Activated CD4-positive, alpha-beta memory T cell treated with anti-CD3 and anti-CD28 coated beads for 36 hours (primary cell): ENCODE measurements at regions of chr5 and their contacts with region 1.

Region 1: GRCh38 chr5:43066799-43067741 is 27.0 kb upstream of the ANXA2R start:
- DNase-seq: peak; percentile 92
- H3K4me3 Mint-ChIP-seq: peak overlapping the region; percentile 96
- H3K27ac Mint-ChIP-seq: peak overlapping the region; percentile 99
- H3K4me1 Mint-ChIP-seq: peaks cover 37% of the 10 kb centered on the region
- H3K27me3 Mint-ChIP-seq: no peaks in the 10 kb centered on the region

Region 2: GRCh38 chr5:42813533-42813932 is 253.5 kb before region 1 on chr5:
- CTCF ChIA-PET with region 1: no interaction called
- POLR2A ChIA-PET with region 1: no interaction called
- intact Hi-C with region 1: no loop called
- DNase-seq: no peak
- H3K4me3 Mint-ChIP-seq: no peak overlapping the region
- H3K27ac Mint-ChIP-seq: no peak overlapping the region
- H3K4me1 Mint-ChIP-seq: peaks cover 2% of the 10 kb centered on the region
- H3K27me3 Mint-ChIP-seq: peaks cover 1% of the 10 kb centered on the region

Region 3: DNA sequence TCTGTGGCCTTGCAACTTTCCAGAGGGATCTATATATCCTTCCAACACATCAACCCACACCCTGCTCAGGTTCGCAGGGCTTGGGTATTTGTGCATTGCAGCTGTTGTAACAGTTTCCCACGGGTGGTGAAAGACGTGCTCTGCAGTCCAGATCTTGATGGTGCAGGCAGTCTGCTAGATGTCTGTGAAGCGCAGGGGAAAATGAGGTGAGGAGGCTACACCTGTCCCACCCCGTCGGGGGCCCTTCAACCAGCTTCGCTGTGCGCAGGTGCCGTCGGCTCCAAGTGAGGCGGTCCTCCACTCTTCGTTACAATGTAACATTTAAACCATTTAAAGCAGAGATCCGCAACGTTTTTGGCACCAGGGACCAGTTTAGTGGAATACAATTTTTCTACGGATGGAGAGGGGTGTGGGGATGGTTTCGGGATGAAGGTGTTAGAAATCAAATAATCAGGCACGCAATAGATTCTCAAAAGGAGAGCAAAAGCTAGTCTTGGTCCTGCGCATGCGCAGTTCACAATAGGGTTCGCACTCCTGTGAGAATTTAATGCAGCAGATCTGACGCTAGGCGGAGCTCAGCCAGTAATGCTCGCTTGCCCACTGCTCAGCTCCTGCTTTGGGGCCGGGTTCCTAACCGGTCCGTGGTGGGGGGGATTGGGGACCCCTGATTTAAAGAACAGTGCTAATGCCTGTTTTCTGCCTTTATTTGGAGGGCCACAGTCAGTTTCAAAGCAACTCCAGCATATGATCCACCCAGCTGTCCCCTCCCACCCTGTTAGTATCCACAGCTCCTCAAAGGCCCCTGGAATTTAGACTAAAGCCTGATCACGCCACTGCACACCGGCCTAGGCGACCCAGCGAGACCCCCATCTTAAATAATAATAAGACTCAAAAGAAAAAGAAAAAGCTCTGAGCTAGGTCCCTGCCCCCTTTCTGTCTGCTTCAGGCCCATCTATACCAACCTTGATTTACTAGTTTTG is 158.3 kb before region 1 on chr5:
- CTCF ChIA-PET with region 1: interaction called, 13 read pairs
- POLR2A ChIA-PET with region 1: no interaction called
- intact Hi-C with region 1: loop called (anchors 1 kb)
- DNase-seq: peak; percentile 93
- H3K4me3 Mint-ChIP-seq: peak overlapping the region; percentile 82
- H3K27ac Mint-ChIP-seq: peak overlapping the region; percentile 70
- H3K4me1 Mint-ChIP-seq: peaks cover 10% of the 10 kb centered on the region
- H3K27me3 Mint-ChIP-seq: peaks cover 10% of the 10 kb centered on the region

Region 4: DNA sequence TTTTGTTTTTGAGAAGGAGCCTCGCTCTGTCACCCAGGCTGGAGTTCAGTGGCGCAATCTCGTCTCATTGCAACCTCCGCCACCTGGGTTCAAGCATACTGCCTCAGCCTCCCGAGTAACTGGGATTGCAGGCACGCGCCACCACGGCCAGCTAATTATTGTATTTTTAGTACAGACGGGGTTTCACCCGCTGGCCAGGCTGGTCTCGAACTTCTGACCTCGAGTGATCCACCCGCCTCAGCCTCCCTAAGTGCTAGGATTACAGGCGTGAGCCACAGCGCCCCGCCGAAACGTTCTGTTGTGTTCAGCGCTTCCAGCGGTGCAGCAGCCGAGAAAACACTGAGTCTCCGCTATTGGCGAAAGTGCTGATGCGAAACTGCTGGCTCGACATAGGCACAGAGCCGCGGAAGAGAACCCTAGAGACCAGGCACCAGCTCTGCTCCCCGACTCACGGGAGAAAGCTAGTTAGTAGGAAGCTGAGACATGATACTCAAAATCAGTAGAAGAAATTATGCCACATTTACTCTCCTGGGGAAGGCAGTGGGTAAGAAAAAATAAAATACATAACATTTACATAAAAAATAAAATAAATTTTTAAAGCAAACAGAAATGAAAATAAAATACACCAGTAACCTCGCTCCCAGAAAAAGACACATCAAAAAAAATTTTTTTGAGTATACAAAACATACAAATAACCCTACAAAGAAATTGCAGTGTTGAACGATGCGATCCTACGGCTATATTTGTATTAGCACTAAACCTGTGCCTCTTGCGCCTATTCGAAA is 58.5 kb before region 1 on chr5:
- CTCF ChIA-PET with region 1: interaction called, 6 read pairs
- POLR2A ChIA-PET with region 1: interaction called, 22 read pairs
- intact Hi-C with region 1: loop called (anchors 1 kb)
- DNase-seq: peak; percentile 93
- H3K4me3 Mint-ChIP-seq: peak overlapping the region; percentile 81
- H3K27ac Mint-ChIP-seq: peak overlapping the region; percentile 88
- H3K4me1 Mint-ChIP-seq: peaks cover 26% of the 10 kb centered on the region
- H3K27me3 Mint-ChIP-seq: no peaks in the 10 kb centered on the region

Region 5: GRCh38 chr5:43105369-43106289 is 38.6 kb after region 1 on chr5:
- CTCF ChIA-PET with region 1: interaction called, 4 read pairs
- POLR2A ChIA-PET with region 1: interaction called, 3 read pairs
- intact Hi-C with region 1: loop called (anchors 1 kb)
- DNase-seq: peak; percentile 92
- H3K4me3 Mint-ChIP-seq: peak overlapping the region; percentile 75
- H3K27ac Mint-ChIP-seq: peak overlapping the region; percentile 79
- H3K4me1 Mint-ChIP-seq: peaks cover 49% of the 10 kb centered on the region
- H3K27me3 Mint-ChIP-seq: no peaks in the 10 kb centered on the region

Region 6: GRCh38 chr5:43129161-43129560 is 62.1 kb after region 1 on chr5:
- CTCF ChIA-PET with region 1: no interaction called
- POLR2A ChIA-PET with region 1: no interaction called
- intact Hi-C with region 1: no loop called
- DNase-seq: no peak
- H3K4me3 Mint-ChIP-seq: no peak overlapping the region
- H3K27ac Mint-ChIP-seq: no peak overlapping the region
- H3K4me1 Mint-ChIP-seq: peaks cover 46% of the 10 kb centered on the region
- H3K27me3 Mint-ChIP-seq: no peaks in the 10 kb centered on the region

Region 7: DNA sequence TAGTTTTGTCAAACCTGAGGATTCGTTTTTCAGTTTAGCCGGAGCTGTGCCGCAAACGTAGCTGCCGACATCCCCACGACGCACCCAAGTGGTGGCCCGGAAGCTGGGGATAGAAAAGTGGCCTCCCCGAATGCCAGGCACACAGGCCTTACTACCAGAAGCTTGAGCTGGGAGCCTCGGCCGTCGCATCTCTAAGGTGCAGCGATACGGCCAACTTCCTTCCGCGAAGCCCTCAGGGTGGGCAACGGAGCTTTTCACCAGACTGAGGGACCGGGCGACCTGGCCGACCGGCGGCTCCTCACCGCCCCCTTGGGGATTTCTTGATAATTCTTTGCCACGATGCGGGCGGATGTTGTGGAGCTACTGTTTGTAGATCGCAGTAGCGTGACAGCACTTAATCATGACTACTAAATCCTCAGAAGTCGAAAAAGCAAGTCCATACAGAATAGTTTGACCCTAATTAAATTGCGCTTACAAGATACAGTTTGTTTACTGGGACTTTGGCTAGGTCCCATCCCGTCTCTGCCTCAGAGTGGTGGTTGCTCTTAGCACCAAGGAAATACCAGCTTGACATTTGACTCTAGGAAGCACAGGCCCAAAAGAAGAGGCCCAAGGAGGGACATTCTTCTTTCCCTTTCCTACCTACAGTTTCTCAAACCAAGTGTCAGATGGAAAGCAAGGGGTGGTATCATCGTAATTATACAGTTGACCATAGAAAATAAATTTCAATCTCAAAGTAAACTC is 417.2 kb after region 1 on chr5:
- CTCF ChIA-PET with region 1: interaction called, 6 read pairs
- POLR2A ChIA-PET with region 1: no interaction called
- intact Hi-C with region 1: loop called (anchors 2 kb)
- DNase-seq: peak; percentile 93
- H3K4me3 Mint-ChIP-seq: peak overlapping the region; percentile 98
- H3K27ac Mint-ChIP-seq: peak overlapping the region; percentile 100
- H3K4me1 Mint-ChIP-seq: peaks cover 49% of the 10 kb centered on the region
- H3K27me3 Mint-ChIP-seq: no peaks in the 10 kb centered on the region

Region 8: DNA sequence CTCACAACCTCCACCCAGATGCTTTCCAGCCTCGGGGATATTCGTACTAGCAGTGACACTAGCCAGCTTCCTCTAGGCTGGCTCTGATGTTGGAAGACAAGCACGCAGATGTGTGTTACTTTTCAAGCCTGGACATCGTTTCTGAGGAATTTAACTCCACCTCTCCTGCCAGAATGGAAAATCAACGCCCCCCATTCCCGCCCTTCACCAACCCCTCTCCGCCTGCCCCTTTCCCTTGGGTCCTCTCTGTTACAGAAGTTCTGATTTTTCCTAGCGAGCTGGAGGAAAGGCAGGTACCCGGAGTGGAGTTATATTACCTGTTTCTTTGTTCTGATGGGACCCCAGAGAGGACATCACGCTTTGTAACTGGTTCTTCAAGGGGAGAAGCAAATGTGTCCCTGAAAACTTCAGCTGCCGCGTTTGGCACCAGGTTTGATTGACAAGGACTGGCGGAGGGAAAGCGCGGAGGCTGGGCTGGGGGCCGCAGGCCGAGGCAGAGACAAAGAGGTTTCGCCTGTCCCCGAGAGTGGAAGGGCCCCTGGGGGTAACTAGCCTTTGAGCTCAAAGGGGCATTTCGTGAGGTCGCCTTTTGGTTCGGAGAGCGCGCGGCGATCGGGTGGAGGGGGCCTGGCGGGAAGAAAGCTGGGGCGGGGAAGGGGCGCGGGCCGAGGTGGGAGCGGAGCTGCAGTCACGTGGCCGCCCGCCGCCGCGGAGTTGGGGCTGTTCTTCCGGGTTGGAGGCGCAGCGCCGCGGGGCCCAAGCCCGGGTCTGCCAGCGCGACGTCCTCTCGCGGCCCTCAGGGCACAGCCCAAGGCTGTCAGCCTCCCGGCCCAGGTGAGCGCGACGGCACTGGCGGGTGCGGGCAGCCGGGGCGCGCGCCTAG is 535.6 kb after region 1 on chr5 and contains the start of gene NNT:
- CTCF ChIA-PET with region 1: no interaction called
- POLR2A ChIA-PET with region 1: interaction called, 4 read pairs
- intact Hi-C with region 1: loop called (anchors 5 kb)
- DNase-seq: peak; percentile 84
- H3K4me3 Mint-ChIP-seq: peak within 1 kb of the TSS; percentile 97
- H3K27ac Mint-ChIP-seq: peak within 1 kb of the TSS; percentile 93
- H3K4me1 Mint-ChIP-seq: peaks cover 35% of the 10 kb centered on the region
- H3K27me3 Mint-ChIP-seq: no peaks in the 10 kb centered on the region
- total RNA-seq, gene NNT: 96.6 to 99.9 TPM